ENCODE measurements at regions of chr1 and their contacts with region 1.

Region 1: DNA sequence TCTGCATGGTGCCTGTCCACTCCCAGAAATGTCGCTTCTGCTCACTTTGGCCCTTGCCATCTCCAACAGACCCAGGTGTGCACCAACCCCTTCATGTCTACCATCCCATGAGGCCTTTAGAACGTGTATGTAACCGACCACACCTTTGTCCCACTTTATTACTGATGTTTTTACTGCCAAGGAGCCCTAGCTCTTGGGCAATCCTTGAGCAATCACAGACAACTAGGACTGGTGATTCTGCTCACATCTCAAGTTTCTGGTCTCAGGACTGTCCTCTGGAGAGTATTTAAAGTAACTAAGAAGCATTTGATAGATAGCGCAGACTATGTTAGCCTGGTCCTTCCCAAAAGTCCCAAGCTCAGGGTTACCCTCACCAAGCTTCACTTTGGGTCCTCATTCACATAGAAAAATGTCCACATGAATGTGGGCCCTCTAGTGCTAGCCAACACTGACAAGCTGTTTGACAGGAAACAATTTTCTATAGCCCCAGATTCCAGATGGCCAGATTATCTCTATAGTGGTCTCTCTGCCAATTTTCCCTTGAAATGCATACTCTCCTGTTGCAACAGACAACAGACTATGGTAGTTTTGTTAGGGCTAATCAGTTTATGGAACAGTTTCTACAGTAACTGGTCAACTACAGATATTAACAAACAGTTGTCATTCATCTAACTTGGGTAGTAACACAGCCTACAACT is 6.9 kb upstream of the TMEM81 start:
- DNase-seq: no peak
- H3K4me3 Mint-ChIP-seq: no peak overlapping the region
- H3K27ac Mint-ChIP-seq: no peak overlapping the region
- H3K4me1 Mint-ChIP-seq: no peaks in the 10 kb centered on the region
- H3K27me3 Mint-ChIP-seq: no peaks in the 10 kb centered on the region

Region 2: GRCh38 chr1:205020466-205020865 is 70.7 kb before region 1 on chr1:
- CTCF ChIA-PET with region 1: no interaction called
- intact Hi-C with region 1: no loop called
- DNase-seq: no peak
- H3K4me3 Mint-ChIP-seq: no peak overlapping the region
- H3K27ac Mint-ChIP-seq: no peak overlapping the region
- H3K4me1 Mint-ChIP-seq: no peaks in the 10 kb centered on the region
- H3K27me3 Mint-ChIP-seq: no peaks in the 10 kb centered on the region

Region 3: DNA sequence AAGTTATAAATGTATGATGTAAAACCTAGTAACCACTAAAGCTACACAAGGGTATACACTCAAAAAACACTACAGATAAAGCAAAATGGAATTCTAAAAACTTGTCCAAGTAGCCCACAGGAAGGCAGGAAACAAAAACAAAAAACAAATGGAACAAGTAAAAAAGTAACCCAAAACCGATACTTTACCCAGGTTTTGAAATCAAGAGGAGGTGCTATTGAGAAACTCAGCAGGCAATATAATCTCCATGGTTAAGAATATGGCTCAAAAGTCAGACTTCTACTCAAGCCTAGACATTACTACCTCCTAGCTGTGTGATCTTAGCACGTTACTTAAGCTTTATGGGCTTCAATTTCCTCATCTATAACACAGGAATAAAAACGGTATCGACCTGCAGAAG is 17.3 kb after region 1 on chr1:
- CTCF ChIA-PET with region 1: interaction called, 3 read pairs
- intact Hi-C with region 1: loop called (anchors 2 kb)
- DNase-seq: no peak
- H3K4me3 Mint-ChIP-seq: no peak overlapping the region
- H3K27ac Mint-ChIP-seq: no peak overlapping the region
- H3K4me1 Mint-ChIP-seq: peaks cover 5% of the 10 kb centered on the region
- H3K27me3 Mint-ChIP-seq: no peaks in the 10 kb centered on the region